Vagina (tissue), 2 donors: ENCODE measurements at regions of chr2 and their contacts with region 1.

Region 1: DNA sequence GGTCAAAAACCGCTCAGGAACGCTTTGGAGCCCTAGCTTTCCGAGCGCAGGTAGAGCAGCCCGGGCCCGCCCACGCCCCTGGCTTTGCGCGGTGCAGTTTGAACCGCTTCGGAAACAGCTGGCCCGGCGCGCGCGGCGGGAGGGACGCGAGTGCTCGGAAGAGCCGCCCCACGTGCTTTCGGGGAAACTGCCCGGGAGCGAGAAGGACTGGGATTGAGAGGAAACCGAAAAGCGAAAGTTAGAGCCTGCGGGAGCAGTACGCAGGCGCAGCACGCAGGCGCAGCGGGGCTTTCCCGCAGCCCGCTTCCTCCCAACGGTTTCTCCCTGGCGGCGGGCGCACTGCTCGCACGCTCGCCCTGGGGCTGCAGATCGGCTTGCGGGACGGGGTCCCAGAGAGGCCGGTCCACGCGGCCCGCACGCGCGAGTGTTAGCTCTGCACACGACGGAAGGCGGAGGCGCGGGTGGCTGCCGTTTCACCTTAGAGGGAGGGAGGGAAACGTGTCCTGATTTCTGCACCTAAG is 6.3 kb upstream of the STAT1 start:
- DNase-seq: peak in 1 of 2 donors; percentile 95
- H3K4me3 ChIP-seq: peak overlapping the region; percentile 66 to 84
- H3K27ac ChIP-seq: peak overlapping the region; percentile 89
- H3K4me1 ChIP-seq: peaks cover 11% of the 10 kb centered on the region
- H3K27me3 ChIP-seq: no peaks in the 10 kb centered on the region
- CTCF ChIP-seq: no peak
- POLR2A ChIP-seq: peak in 1 of 2 donors; percentile 86

Region 2: DNA sequence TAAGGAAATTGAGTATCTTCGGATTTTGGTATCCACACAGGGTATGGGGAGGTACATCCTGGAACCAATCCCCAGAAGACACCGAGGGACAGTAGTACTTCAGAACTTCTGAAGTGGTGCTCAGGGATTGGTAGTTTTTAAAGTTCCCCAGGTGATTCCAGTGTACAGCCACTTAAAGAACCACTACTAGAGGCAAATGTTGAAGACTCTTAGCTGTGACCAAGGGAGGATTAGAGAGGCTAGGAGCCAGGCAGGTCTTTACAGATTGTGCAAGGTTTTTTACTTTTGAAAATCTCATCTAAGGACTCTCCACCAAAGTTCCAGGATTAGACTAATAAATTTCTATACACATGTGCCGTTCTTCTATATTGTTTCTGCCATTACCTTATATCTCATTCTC is 192.6 kb before region 1 on chr2:
- intact Hi-C with region 1: no loop called
- DNase-seq: no peak
- H3K4me3 ChIP-seq: no peak overlapping the region
- H3K27ac ChIP-seq: no peak overlapping the region
- H3K4me1 ChIP-seq: no peaks in the 10 kb centered on the region
- H3K27me3 ChIP-seq: no peaks in the 10 kb centered on the region
- CTCF ChIP-seq: no peak
- POLR2A ChIP-seq: no peak

Region 3: GRCh38 chr2:190880378-190881073 is 139.8 kb before region 1 on chr2 and contains the start of gene GLS:
- intact Hi-C with region 1: loop called (anchors 5 kb)
- DNase-seq: peak; percentile 97 to 99
- H3K4me3 ChIP-seq: peak within 1 kb of the TSS; percentile 89 to 94
- H3K27ac ChIP-seq: peak within 1 kb of the TSS; percentile 97
- H3K4me1 ChIP-seq: peaks cover 30% of the 10 kb centered on the region
- H3K27me3 ChIP-seq: no peaks in the 10 kb centered on the region
- CTCF ChIP-seq: no peak
- POLR2A ChIP-seq: peak in 1 of 2 donors; percentile 99
- total RNA-seq, gene GLS: 88.9 TPM